ENCODE measurements at regions of chr10 and their contacts with region 1.

Region 1: GRCh38 chr10:32005050-32005449 is 51.2 kb downstream of the KIF5B start:
- DNase-seq: peak; percentile 61
- H3K4me3 ChIP-seq: no peak overlapping the region
- H3K27ac ChIP-seq: no peak overlapping the region
- H3K4me1 ChIP-seq: no peaks in the 10 kb centered on the region
- CTCF ChIP-seq: peak; percentile 80

Region 2: GRCh38 chr10:31836569-31837406 is 168.3 kb before region 1 on chr10:
- CTCF ChIA-PET with region 1: no interaction called
- POLR2A ChIA-PET with region 1: no interaction called
- intact Hi-C with region 1: loop called (anchors 5 kb)
- DNase-seq: peak; percentile 52
- H3K4me3 ChIP-seq: no peak overlapping the region
- H3K27ac ChIP-seq: no peak overlapping the region
- H3K4me1 ChIP-seq: no peaks in the 10 kb centered on the region
- CTCF ChIP-seq: peak; percentile 85

Region 3: DNA sequence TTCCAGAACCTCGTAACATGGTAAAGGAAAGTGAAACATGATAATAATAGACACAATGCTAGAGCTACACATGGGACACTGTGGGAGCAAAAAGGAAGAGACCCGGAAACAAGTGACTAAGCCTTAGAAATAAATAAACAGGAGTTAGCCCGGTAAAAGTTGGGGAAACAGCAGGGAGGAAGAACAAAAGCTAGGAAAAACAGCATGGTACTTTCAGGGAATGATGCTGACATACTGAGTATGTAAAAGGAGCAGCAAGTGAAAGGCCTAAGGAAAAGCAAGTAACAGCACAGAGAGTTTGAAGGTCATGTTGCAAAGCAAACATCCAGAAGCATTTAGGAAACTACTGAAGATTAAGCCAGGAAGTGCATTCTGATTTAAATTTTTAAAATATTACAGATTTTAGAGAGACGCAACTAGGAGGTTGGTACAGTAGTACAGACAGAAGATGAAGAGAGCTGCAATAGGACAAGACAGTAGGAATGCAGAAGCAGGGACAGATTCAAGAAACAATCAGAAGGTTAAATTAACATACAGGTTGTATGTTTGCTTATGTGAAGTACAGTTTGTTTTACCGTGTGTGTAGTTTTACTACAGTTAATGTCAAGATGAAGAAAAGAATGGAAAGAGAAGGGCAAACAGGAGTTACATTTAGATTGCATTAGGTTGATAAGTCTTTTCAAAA is 140.1 kb before region 1 on chr10:
- CTCF ChIA-PET with region 1: no interaction called
- POLR2A ChIA-PET with region 1: interaction called, 3 read pairs
- intact Hi-C with region 1: loop called (anchors 1 kb)
- DNase-seq: no peak
- H3K4me3 ChIP-seq: no peak overlapping the region
- H3K27ac ChIP-seq: no peak overlapping the region
- H3K4me1 ChIP-seq: peaks cover 7% of the 10 kb centered on the region
- CTCF ChIP-seq: no peak